Activated CD4-positive, alpha-beta memory T cell treated with anti-CD3 and anti-CD28 coated beads for 36 hours (primary cell): ENCODE measurements at regions of chr14 and their contacts with region 1.

Region 1: DNA sequence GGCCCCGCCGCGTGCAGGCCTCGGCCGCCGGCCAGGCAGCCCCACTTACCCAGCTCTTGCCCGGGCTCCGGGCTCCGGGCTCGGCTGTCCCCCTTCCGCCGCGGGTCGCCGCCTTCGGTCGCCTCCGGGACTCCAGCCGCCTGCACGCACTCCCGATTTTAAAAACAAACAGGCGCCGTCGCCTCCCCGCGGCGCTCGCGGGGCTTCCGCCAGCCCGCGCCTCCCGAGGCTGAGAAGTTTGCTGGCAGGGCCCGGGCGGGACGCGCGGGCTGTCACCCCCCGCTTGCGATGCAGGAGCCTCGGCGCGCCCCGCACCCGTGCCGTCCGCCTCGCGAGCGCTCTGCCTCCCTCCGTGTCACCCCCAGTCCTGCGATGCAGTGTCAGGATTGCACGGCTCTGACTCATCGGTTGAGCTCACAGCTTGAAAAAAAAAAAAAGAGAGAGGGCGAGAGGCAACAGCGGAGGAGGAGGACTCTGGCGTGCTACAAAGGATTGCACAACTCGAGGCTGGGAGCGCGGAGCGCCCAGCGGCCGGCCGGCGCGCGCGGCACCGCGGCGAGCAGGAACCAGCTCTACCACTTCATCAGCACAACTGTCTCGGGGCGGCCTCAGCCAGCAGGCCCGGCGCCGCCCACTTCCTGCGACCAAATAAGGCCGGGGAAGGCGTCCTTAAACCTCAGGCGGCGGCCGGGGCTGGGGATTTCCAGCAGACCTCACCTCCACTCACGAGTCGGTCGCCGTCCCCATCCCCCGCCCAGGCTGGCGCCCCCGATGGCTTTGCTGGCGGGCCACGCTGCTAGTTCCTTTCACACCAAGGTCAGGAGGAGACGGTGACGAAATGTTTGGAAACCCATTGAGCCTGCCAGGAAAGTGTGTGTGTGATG is 45.8 kb upstream of the PNMA1 start:
- DNase-seq: peak; percentile 97
- H3K4me3 Mint-ChIP-seq: peak overlapping the region; percentile 84
- H3K27ac Mint-ChIP-seq: peak overlapping the region; percentile 99
- H3K4me1 Mint-ChIP-seq: peaks cover 74% of the 10 kb centered on the region
- H3K27me3 Mint-ChIP-seq: no peaks in the 10 kb centered on the region

Region 2: DNA sequence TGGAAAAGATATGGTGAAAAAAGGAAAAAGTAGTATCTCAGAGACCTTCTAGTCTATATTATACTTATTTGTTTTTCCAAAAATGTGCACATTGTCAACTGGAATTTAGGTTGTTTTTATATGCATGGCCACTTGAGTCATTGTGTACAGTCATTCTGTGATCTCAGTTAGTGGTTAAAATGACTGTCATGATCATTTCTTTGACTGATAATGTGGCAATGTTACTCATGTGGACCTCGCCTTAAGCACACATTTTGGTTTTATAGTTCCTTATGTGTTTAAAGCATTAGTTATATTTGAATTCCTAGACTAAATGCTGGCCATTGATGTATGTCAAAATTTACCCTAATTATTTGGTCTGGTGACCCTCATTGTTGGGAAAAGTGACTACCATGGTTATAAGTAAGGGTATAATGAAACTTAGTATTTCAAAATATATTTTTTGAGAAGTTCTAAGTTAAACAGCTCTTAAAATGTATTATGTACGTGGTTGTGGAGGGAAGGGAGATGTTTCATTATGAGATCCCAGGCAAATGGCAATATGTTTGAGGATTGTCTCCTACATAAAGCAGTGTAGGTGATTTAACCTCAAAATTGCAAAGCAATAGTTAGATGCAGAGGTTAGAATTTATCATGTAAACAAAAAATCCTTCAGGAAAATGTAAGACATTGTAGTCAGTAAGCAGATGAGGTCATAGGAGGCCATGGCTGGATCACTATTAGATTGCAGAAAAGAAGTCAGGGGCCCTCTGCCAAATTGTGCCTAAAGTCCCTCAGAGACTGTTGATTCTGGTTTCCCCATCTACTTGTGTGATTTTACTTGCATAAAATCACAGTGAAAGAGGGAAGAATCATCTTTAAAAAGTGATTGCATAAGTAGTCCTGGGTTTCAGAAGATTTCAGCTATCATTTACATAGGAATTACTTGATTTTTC is 63.2 kb before region 1 on chr14:
- CTCF ChIA-PET with region 1: interaction called, 3 read pairs
- POLR2A ChIA-PET with region 1: no interaction called
- intact Hi-C with region 1: loop called (anchors 2 kb)
- DNase-seq: no peak
- H3K4me3 Mint-ChIP-seq: peak overlapping the region; percentile 55
- H3K27ac Mint-ChIP-seq: peak overlapping the region; percentile 86
- H3K4me1 Mint-ChIP-seq: peaks cover 38% of the 10 kb centered on the region
- H3K27me3 Mint-ChIP-seq: no peaks in the 10 kb centered on the region

Region 3: DNA sequence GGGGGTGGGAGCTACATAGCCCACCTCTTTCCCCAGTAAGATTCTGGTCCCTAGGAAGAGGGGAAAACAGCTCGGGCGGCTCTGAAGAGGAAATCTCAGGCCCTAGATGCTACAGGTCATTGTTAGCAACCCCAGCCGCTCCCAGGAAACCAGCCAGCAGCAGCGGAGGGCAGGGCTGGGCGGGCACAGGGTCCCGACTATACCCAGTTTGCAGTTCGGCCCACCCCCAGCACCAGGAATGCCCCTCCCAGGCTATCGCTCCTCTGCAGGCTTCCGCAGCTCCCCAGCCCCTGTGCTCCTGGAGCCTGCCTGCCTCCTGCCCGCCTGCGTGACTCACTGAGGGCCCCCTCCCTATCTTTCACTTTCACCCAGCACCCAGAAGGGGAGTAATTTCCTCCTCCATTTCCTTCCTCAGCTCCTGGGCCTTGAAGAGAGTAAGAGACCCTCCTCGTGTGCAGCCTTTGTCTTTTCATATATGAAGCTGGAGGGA is 18.5 kb before region 1 on chr14:
- CTCF ChIA-PET with region 1: interaction called, 56 read pairs
- POLR2A ChIA-PET with region 1: interaction called, 56 read pairs
- intact Hi-C with region 1: loop called (anchors 1 kb)
- DNase-seq: peak; percentile 85
- H3K4me3 Mint-ChIP-seq: peak overlapping the region; percentile 43
- H3K27ac Mint-ChIP-seq: peak overlapping the region; percentile 89
- H3K4me1 Mint-ChIP-seq: peaks cover 64% of the 10 kb centered on the region
- H3K27me3 Mint-ChIP-seq: no peaks in the 10 kb centered on the region

Region 4: DNA sequence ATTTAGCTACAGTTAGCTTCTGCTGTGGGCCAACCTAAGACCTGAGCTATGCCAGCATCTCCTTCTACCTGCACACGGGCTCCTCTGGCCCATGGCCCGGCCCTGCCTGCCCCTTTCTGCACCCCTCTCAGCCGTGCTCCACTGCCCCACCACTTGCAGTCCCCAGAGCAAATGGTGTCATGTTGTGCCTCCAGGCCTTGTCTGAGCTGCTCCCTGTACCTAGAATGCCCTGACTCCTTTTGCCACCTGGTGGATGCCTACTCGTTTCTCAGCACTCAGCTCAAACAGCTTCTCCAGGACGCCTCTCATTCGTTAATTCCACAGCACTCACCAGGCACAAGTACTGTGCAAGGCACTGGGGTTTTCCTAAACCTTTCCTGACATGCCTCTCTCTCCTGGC is 17.4 kb after region 1 on chr14:
- CTCF ChIA-PET with region 1: interaction called, 44 read pairs
- POLR2A ChIA-PET with region 1: interaction called, 128 read pairs
- intact Hi-C with region 1: no loop called
- DNase-seq: no peak
- H3K4me3 Mint-ChIP-seq: no peak overlapping the region
- H3K27ac Mint-ChIP-seq: peak overlapping the region; percentile 13
- H3K4me1 Mint-ChIP-seq: peaks cover 58% of the 10 kb centered on the region
- H3K27me3 Mint-ChIP-seq: no peaks in the 10 kb centered on the region

Region 5: GRCh38 chr14:73851644-73852382 is 91.9 kb after region 1 on chr14 and contains the start of gene PTGR2:
- CTCF ChIA-PET with region 1: interaction called, 3 read pairs
- POLR2A ChIA-PET with region 1: interaction called, 10 read pairs
- intact Hi-C with region 1: no loop called
- DNase-seq: peak; percentile 92
- H3K4me3 Mint-ChIP-seq: peak within 1 kb of the TSS; percentile 98
- H3K27ac Mint-ChIP-seq: peak within 1 kb of the TSS; percentile 98
- H3K4me1 Mint-ChIP-seq: peaks cover 21% of the 10 kb centered on the region
- H3K27me3 Mint-ChIP-seq: no peaks in the 10 kb centered on the region
- total RNA-seq, gene PTGR2: 9.9 to 10.3 TPM

Region 6: GRCh38 chr14:74018586-74019407 is 258.8 kb after region 1 on chr14 and contains the starts of genes BBOF1 and ENTPD5:
- CTCF ChIA-PET with region 1: no interaction called
- POLR2A ChIA-PET with region 1: interaction called, 3 read pairs
- intact Hi-C with region 1: loop called (anchors 5 kb)
- DNase-seq: peak; percentile 87
- H3K4me3 Mint-ChIP-seq: peak within 1 kb of the TSS; percentile 95
- H3K27ac Mint-ChIP-seq: peak within 1 kb of the TSS; percentile 89
- H3K4me1 Mint-ChIP-seq: peaks cover 5% of the 10 kb centered on the region
- H3K27me3 Mint-ChIP-seq: no peaks in the 10 kb centered on the region
- total RNA-seq, gene BBOF1: 1.0 to 1.3 TPM
- total RNA-seq, gene ENTPD5: 10.2 to 11.2 TPM